ENCODE measurements at regions of chr10 and their contacts with region 1.

Region 1: GRCh38 chr10:17228091-17228940 is at the start of gene VIM:
- DNase-seq: peak; percentile 96
- ATAC-seq: peak; percentile 57
- H3K4me3 ChIP-seq: peak within 1 kb of the TSS; percentile 87
- H3K27ac ChIP-seq: peak within 1 kb of the TSS; percentile 97
- H3K4me1 ChIP-seq: peaks cover 11% of the 10 kb centered on the region
- H3K27me3 ChIP-seq: no peaks in the 10 kb centered on the region
- CTCF ChIP-seq: peak; percentile 14; the same call in 1 of the 2 replicates
- POLR2A ChIP-seq: peak; percentile 68
- RAD21 ChIP-seq: peak; percentile 44; the same call in 1 of the 2 replicates
- total RNA-seq, gene VIM: 6,409 and 6,735 TPM in 2 replicates

Region 2: GRCh38 chr10:16843252-16843870 is 385.0 kb before region 1 on chr10:
- CTCF ChIA-PET with region 1: interaction called, 3 read pairs
- POLR2A ChIA-PET with region 1: interaction called, 3 read pairs
- dilution Hi-C with region 1: no loop called
- in situ Hi-C with region 1: no loop called
- intact Hi-C with region 1: loop called (anchors 2 kb)
- DNase-seq: peak; percentile 82
- ATAC-seq: peak; percentile 85
- H3K4me3 ChIP-seq: no peak overlapping the region
- H3K27ac ChIP-seq: no peak overlapping the region
- H3K4me1 ChIP-seq: peaks cover 6% of the 10 kb centered on the region; the same call in 1 of the 2 replicates
- H3K27me3 ChIP-seq: no peaks in the 10 kb centered on the region
- CTCF ChIP-seq: peak; percentile 71
- POLR2A ChIP-seq: no peak
- RAD21 ChIP-seq: peak; percentile 77

Region 3: GRCh38 chr10:16891375-16892313 is 336.7 kb before region 1 on chr10:
- CTCF ChIA-PET with region 1: no interaction called
- POLR2A ChIA-PET with region 1: interaction called, 3 read pairs
- dilution Hi-C with region 1: no loop called
- in situ Hi-C with region 1: no loop called
- intact Hi-C with region 1: loop called (anchors 1 kb)
- DNase-seq: peak; percentile 82
- ATAC-seq: peak; percentile 67
- H3K4me3 ChIP-seq: no peak overlapping the region
- H3K27ac ChIP-seq: no peak overlapping the region
- H3K4me1 ChIP-seq: no peaks in the 10 kb centered on the region; the same call in none of the 2 replicates
- H3K27me3 ChIP-seq: no peaks in the 10 kb centered on the region
- CTCF ChIP-seq: peak; percentile 55
- POLR2A ChIP-seq: peak; percentile 73
- RAD21 ChIP-seq: peak; percentile 68

Region 4: DNA sequence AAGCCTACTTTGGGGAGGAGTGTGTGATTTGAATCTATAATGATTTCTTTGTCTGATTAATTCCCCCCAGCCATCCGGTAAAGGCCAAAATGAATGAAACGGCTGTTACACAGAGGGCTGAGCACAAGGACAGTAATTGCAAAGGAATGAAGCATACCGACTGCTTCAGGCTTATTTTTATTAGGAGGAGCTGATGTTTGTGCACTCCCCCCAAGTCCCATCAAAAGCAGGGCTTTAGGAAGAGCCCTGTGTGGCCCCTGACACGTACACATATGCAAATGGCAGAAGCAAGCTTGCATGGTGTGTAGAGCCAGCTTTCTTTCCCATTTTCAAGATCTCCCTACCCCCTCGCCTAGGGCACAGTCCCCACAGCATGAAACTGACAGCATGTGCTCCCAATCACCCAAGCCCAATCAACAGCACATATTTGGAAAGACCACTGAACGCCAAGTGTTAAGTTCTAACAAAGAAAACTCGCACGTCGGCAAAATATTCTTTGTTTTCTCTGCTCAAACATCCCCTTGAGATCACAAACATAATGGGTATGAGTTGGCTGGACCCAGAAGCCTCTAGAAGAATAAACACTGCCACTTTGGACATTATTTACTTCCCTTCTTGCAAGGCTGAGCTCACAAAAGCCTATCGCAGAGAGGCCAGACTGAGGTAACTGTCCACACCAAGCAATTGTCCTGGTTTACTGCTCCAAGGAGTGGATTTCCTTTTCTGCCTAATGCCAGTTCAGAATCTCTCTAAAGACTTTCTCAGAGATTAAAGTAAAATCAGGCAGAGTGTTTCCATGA is 241.7 kb before region 1 on chr10:
- CTCF ChIA-PET with region 1: no interaction called
- POLR2A ChIA-PET with region 1: interaction called, 18 read pairs
- dilution Hi-C with region 1: no loop called
- in situ Hi-C with region 1: no loop called
- intact Hi-C with region 1: loop called (anchors 5 kb)
- DNase-seq: peak; percentile 88
- ATAC-seq: peak; percentile 92
- H3K4me3 ChIP-seq: no peak overlapping the region
- H3K27ac ChIP-seq: peak overlapping the region; percentile 95
- H3K4me1 ChIP-seq: peaks cover 25% of the 10 kb centered on the region
- H3K27me3 ChIP-seq: no peaks in the 10 kb centered on the region
- CTCF ChIP-seq: no peak
- POLR2A ChIP-seq: no peak
- RAD21 ChIP-seq: peak; percentile 22; the same call in 1 of the 2 replicates

Region 5: DNA sequence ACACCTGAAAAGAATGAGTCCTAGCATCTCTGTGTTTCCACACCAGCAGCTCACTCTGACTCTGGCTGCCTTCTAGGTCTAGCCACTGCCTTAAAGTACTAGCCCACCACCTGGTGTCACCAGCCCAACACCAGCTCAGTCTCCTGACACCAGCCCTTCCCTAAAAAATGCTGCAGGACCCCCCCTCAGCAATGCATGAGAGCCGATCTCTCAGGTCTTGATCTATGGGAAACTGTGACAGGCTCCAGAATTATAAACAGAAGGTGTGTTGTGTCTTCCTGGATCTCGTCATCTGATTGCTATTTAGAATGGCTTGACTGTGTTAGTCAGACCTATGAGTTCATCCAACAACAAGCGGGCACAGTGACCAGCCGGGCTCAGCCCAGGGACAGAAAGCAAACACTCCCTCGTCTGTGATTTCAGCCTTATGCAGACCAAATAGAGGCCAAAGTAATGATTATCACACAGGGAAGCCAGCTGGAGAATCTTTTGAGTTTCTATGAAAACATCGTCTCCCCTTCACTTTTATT is 165.3 kb before region 1 on chr10:
- CTCF ChIA-PET with region 1: no interaction called
- POLR2A ChIA-PET with region 1: interaction called, 4 read pairs
- dilution Hi-C with region 1: no loop called
- in situ Hi-C with region 1: no loop called
- intact Hi-C with region 1: loop called (anchors 1 kb)
- DNase-seq: peak; percentile 86
- ATAC-seq: peak; percentile 55
- H3K4me3 ChIP-seq: no peak overlapping the region
- H3K27ac ChIP-seq: peak overlapping the region; percentile 68
- H3K4me1 ChIP-seq: peaks cover 19% of the 10 kb centered on the region
- H3K27me3 ChIP-seq: no peaks in the 10 kb centered on the region
- CTCF ChIP-seq: no peak
- POLR2A ChIP-seq: 0 out of 2 replicates have a peak, but pooled peaks have one; percentile 45
- RAD21 ChIP-seq: peak; percentile 39

Region 6: DNA sequence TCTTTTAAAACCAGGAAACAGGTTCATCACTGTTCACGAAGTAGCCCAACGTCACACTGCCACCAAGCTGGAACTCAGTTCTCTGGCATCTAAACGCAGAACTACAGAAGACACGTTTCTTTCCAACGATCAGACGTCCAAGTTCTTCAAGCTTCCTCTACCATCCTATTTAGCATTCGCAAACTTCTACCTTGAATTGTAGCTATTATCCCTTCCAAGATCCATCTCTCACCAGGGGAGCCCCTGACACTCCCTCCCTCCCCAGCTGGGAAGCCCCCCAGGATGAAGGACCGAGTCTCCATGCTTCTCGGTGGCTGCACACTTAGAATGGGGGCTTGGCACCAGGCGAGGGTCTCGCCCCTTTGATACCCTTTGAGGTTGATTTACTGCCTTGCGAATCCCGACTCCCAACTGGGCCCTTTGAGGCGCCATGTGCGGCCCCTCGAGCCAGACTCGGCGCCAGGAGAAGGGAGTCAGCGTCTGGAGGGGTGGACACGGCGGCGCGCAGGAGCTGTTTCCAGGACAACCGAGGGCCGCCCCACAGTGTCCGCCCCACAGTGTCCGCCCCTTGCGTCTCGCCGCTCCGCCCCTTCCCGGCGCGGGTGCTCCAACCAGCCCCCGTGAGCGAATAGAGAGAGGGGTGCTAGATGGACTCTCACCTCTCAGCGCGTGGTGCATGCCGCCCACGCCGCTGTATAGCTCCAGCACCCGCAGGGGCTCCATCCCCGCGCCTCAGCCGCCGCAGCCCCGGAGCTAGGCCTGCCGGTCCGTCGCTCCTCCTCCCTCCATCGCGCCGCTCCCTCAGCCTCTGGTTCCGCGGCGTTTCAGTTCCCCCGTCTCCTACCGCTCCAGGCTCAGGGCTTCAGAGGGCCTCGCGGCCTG is 27.2 kb before region 1 on chr10 and contains the start of gene TRDMT1:
- CTCF ChIA-PET with region 1: interaction called, 4 read pairs
- POLR2A ChIA-PET with region 1: interaction called, 3 read pairs
- dilution Hi-C with region 1: no loop called
- in situ Hi-C with region 1: no loop called
- intact Hi-C with region 1: loop called (anchors 1 kb)
- DNase-seq: peak; percentile 86
- ATAC-seq: peak; percentile 98
- H3K4me3 ChIP-seq: peak within 1 kb of the TSS; percentile 74
- H3K27ac ChIP-seq: peak within 1 kb of the TSS; percentile 93
- H3K4me1 ChIP-seq: peaks cover 6% of the 10 kb centered on the region; the same call in 1 of the 2 replicates
- H3K27me3 ChIP-seq: no peaks in the 10 kb centered on the region
- CTCF ChIP-seq: no peak
- POLR2A ChIP-seq: peak; percentile 83
- RAD21 ChIP-seq: peak; percentile 34
- total RNA-seq, gene TRDMT1: 4.7 and 6.7 TPM in 2 replicates

Region 7: DNA sequence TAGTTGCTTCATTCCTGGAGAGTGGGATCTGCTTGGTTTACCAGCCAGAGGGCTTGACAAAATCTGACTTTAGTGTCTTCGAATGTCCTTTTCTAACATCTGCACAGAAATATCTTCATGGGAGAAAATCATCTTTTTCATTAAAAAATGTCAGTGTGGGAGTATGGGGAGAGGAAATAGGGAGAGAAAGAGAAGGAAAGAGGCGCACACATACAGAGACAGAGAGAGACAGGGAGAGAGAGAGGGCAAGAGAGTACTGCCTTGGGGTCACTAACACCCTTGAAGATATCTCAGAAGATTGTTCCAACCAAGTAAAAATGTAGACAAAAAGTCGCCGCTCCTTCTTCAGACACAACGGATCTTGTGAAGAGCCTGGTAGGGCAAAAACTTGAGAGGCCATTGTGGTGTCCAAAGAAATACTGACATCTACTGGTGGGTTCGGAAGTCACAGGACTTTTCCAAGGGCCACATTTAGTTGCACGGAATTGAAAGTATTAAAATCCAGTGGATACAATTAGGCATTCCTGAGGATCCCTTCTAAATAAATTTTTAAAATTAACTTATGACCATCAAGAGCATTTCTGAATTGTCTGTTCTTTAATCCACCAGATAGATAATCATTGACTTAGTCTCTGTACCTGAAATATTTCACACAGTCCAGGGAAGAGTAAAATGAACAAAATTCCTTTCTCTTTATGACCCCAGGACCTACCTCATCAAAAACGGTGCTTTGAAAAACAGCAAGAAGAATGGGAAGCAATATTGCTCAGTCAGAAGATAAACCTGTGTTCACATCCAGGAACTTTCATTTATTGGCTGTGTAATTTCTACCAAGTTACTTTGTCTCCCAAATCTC is 29.4 kb after region 1 on chr10:
- CTCF ChIA-PET with region 1: no interaction called
- POLR2A ChIA-PET with region 1: no interaction called
- dilution Hi-C with region 1: no loop called
- in situ Hi-C with region 1: no loop called
- intact Hi-C with region 1: loop called (anchors 1 kb)
- DNase-seq: peak; percentile 78
- ATAC-seq: peak; percentile 98
- H3K4me3 ChIP-seq: peak overlapping the region; percentile 37; the same call in 1 of the 2 replicates
- H3K27ac ChIP-seq: peak overlapping the region; percentile 18; the same call in 1 of the 2 replicates
- H3K4me1 ChIP-seq: no peaks in the 10 kb centered on the region
- H3K27me3 ChIP-seq: no peaks in the 10 kb centered on the region
- CTCF ChIP-seq: peak; percentile 94
- POLR2A ChIP-seq: no peak
- RAD21 ChIP-seq: peak; percentile 97